HepG2 (cell line): ENCODE measurements at regions of chr3 and their contacts with region 1.

Region 1: DNA sequence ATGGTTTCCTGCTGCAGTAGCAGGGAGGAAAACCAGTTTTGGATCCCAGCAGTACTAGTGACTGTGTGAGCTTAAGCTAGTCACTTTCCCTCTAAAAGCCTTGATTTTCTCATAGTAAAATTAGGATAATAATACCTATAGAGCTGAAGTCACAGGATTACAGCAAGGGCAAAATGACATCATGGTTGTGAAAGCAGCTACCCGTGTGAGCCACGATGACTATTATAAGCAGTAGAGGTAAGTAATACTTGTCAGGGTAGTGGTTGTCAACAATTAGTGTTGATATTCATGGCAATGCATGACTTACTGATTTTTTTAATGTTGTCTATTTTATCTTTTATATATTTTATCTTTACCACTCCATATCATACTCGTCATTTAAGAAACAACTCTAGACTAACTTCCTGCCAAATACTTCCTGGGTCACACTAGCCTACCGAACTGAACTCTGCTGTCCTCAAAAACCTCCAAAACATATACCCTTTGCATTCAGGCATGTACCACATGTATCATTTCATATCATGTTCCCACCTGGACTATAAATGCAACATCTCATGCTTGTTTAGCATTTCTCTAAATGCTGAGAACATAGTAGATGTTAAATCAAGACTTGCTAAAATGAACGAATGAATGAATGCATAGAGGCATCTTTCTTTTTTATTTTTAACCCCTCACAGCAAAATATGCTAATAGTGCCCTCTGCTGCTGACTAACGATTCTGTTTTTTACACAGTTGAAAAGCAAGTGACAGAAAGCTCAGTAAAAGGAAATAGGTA is 172.6 kb downstream of the P3H2 start:
- DNase-seq: no peak
- ATAC-seq: no peak; the same call in 2 of the 3 replicates
- H3K4me3 ChIP-seq: no peak overlapping the region
- H3K27ac ChIP-seq: no peak overlapping the region
- H3K4me1 ChIP-seq: peaks cover 14% of the 10 kb centered on the region; the same call in 1 of the 2 replicates
- H3K27me3 ChIP-seq: no peaks in the 10 kb centered on the region
- CTCF ChIP-seq: peak; percentile 56
- EP300 ChIP-seq: no peak
- POLR2A ChIP-seq: no peak
- RAD21 ChIP-seq: 0 out of 2 replicates have a peak, but pooled peaks have one; percentile 15

Region 2: DNA sequence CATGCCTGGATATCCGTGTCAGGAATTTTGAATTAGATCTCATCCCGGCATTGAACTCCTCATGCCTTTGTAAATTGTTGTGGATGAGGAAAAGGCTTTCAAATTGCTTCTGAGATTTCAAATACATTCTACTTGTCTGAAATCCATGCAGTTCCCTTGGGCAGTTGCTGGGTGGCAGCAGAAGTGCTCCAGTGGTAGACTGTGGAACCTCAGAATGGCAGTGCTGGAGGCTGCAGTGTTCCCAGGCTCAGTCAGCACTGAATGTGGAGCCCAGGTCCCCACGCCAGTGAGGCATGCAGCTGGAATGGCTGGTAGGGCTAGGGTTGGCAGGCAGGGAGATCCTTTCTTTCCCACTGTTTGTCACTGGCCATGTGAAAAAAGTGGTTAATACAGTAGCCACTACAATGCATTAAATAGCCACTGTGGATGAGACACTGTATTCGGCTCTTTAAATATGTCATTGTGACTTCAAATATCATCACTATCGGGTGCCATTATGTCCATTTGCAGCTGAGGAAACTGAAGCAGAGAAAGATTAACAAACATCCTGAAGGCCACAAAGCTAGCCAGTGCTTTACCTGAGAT is 677.8 kb before region 1 on chr3:
- CTCF ChIA-PET with region 1: interaction called, 3 read pairs
- POLR2A ChIA-PET with region 1: no interaction called
- in situ Hi-C with region 1: loop called (anchors 5 kb)
- intact Hi-C with region 1: loop called (anchors 1 kb)
- DNase-seq: peak; percentile 47
- ATAC-seq: peak; percentile 99
- H3K4me3 ChIP-seq: no peak overlapping the region
- H3K27ac ChIP-seq: no peak overlapping the region
- H3K4me1 ChIP-seq: no peaks in the 10 kb centered on the region
- H3K27me3 ChIP-seq: no peaks in the 10 kb centered on the region
- CTCF ChIP-seq: peak; percentile 71
- EP300 ChIP-seq: no peak
- POLR2A ChIP-seq: no peak
- RAD21 ChIP-seq: peak; percentile 45; the same call in 1 of the 2 replicates

Region 3: DNA sequence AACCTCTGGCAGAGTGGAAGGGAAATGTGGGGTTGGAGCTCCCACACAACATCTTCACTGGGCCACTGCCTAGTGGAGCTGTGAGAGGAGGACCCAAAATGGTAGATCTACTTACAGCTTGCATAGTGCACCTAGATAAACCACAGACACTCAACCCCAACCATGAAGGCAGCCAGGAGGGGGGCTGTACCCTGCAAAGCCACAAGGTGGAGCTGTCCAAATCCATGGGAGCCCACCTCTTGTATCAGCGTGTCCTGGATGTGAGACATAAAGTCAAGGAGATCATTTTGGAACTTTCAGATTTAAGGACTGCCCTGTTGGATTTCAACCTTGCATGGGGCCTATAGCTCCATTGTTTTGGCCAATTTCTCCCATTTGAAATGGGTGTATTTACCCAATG is 296.1 kb before region 1 on chr3:
- CTCF ChIA-PET with region 1: no interaction called
- POLR2A ChIA-PET with region 1: no interaction called
- in situ Hi-C with region 1: no loop called
- intact Hi-C with region 1: loop called (anchors 2 kb)
- DNase-seq: peak; percentile 4
- ATAC-seq: peak; percentile 69
- H3K4me3 ChIP-seq: no peak overlapping the region
- H3K27ac ChIP-seq: no peak overlapping the region
- H3K4me1 ChIP-seq: no peaks in the 10 kb centered on the region
- H3K27me3 ChIP-seq: no peaks in the 10 kb centered on the region
- CTCF ChIP-seq: peak; percentile 44
- EP300 ChIP-seq: no peak
- POLR2A ChIP-seq: no peak
- RAD21 ChIP-seq: no peak